ENCODE measurements at regions of chr15 and their contacts with region 1.

Region 1: GRCh38 chr15:42933886-42934667 is 13.5 kb upstream of the TTBK2 start:
- DNase-seq: no peak
- ATAC-seq: no peak
- H3K4me3 ChIP-seq: no peak overlapping the region
- H3K27ac ChIP-seq: no peak overlapping the region
- H3K4me1 ChIP-seq: no peaks in the 10 kb centered on the region
- H3K27me3 ChIP-seq: no peaks in the 10 kb centered on the region
- CTCF ChIP-seq: no peak
- EP300 ChIP-seq: no peak
- POLR2A ChIP-seq: no peak
- RAD21 ChIP-seq: no peak

Region 2: GRCh38 chr15:41690636-41691035 is 1243.4 kb before region 1 on chr15:
- CTCF ChIA-PET with region 1: no interaction called
- POLR2A ChIA-PET with region 1: no interaction called
- in situ Hi-C with region 1: no loop called
- intact Hi-C with region 1: no loop called
- DNase-seq: peak in 1 of 4 experiments; percentile 63
- ATAC-seq: peak; percentile 84
- H3K4me3 ChIP-seq: no peak overlapping the region
- H3K27ac ChIP-seq: peak overlapping the region; percentile 11; the same call in 2 of the 3 replicates
- H3K4me1 ChIP-seq: peaks cover 4 to 24% of the 10 kb centered on the region in 2 experiments; a peak in 3 of 5 replicates
- H3K27me3 ChIP-seq: no peaks in the 10 kb centered on the region
- CTCF ChIP-seq: no peak
- EP300 ChIP-seq: no peak
- POLR2A ChIP-seq: no peak
- RAD21 ChIP-seq: no peak

Region 3: DNA sequence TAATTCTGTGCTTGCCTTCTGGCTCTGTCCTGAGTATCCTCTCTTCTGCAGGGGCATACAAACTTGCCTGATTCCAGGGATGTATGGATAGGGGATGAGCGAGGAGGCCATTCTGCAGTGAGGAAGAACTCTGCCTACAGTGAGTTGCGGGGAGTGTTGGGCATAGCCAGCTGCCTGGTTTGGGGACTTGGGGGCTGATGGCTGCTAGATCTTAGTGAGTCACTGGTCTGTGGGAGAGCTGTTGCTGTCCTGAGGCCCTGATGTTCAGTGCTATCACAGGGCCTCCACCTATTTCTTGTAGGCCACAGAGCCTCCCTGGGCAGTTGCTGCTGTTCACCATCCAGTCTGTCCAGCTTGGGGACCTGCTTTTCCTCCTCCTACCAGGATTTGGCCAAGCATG is 217.5 kb before region 1 on chr15:
- CTCF ChIA-PET with region 1: no interaction called
- POLR2A ChIA-PET with region 1: no interaction called
- in situ Hi-C with region 1: loop called (anchors 5 kb)
- intact Hi-C with region 1: no loop called
- DNase-seq: peak in 2 of 4 experiments; percentile 6 to 7
- ATAC-seq: no peak
- H3K4me3 ChIP-seq: no peak overlapping the region
- H3K27ac ChIP-seq: no peak overlapping the region
- H3K4me1 ChIP-seq: no peaks in the 10 kb centered on the region
- H3K27me3 ChIP-seq: no peaks in the 10 kb centered on the region
- CTCF ChIP-seq: no peak
- EP300 ChIP-seq: no peak
- POLR2A ChIP-seq: no peak
- RAD21 ChIP-seq: no peak

Region 4: GRCh38 chr15:42879443-42879842 is 54.6 kb before region 1 on chr15:
- CTCF ChIA-PET with region 1: no interaction called
- POLR2A ChIA-PET with region 1: no interaction called
- in situ Hi-C with region 1: no loop called
- intact Hi-C with region 1: no loop called
- DNase-seq: no peak
- ATAC-seq: no peak
- H3K4me3 ChIP-seq: no peak overlapping the region
- H3K27ac ChIP-seq: no peak overlapping the region
- H3K4me1 ChIP-seq: peaks cover 0 to 2% of the 10 kb centered on the region in 2 experiments; a peak in 1 of 5 replicates
- H3K27me3 ChIP-seq: no peaks in the 10 kb centered on the region
- CTCF ChIP-seq: no peak
- EP300 ChIP-seq: no peak
- POLR2A ChIP-seq: no peak
- RAD21 ChIP-seq: no peak

Region 5: DNA sequence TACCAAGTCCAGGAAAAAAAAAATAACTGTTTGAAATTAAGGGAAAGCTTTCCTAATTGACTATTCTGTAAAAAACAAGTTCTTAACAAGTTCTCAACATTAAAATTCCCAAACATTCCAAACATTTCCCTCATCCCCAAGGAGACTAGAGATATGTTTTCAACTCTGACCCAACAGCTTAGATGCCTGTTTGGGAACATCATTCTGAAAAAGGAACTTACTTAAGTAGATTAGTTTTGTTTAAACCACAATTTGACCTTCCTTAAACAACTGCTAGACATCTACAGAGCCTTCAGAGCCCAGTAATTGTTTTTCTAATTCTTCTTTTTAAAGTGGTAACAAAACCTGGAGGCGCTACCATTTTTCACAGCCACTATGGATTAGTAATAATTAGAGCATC is 158.9 kb after region 1 on chr15:
- CTCF ChIA-PET with region 1: no interaction called
- POLR2A ChIA-PET with region 1: no interaction called
- in situ Hi-C with region 1: no loop called
- intact Hi-C with region 1: no loop called
- DNase-seq: no peak
- ATAC-seq: no peak
- H3K4me3 ChIP-seq: no peak overlapping the region
- H3K27ac ChIP-seq: no peak overlapping the region
- H3K4me1 ChIP-seq: peaks cover 11 to 26% of the 10 kb centered on the region in 2 experiments
- H3K27me3 ChIP-seq: no peaks in the 10 kb centered on the region
- CTCF ChIP-seq: no peak
- EP300 ChIP-seq: no peak
- POLR2A ChIP-seq: no peak
- RAD21 ChIP-seq: no peak